Tibial artery (tissue), 4 donors: ENCODE measurements at regions of chr2 and their contacts with region 1.

Region 1: DNA sequence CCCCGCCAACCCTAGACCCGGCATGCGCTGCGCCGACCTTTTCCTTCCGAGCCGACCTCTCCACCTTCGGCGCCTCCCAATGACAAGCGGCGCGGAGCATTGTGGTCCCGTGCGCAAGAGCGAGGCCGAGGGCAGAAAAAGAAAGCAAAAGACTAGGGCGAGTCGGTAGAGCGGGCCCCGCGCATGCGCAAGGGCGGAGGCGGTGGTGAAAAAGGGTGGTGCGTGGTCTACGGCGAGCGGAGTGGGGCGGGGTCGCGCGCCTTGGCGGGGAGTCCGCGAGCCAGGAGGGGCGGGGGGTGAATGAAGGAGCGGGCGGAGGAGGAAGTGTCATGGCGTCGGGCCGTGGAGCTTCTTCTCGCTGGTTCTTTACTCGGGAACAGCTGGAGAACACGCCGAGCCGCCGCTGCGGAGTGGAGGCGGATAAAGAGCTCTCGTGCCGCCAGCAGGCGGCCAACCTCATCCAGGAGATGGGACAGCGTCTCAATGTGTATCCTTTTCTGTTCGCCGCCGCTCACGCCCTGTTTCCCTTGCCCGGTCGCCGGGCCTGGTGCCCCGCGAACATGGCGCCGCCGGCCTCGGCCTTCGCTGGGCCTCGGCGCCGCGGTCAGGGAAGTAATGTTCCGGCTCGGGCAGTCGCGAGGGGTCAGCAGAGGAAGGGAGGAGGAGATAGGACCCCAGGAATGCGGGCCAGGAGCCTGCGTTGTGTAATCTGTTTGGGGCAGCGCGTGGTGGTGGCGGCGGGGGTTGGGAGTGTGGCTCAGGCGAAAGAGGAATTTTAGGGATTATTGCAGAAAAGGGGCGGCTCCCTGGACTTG is at the start of gene CCNT2:
- DNase-seq: peak; percentile 99 to 100
- H3K4me3 ChIP-seq: peak within 1 kb of the TSS; percentile 78 to 95
- H3K27ac ChIP-seq: peak within 1 kb of the TSS; percentile 93 to 98
- H3K4me1 ChIP-seq: peaks cover 0 to 49% (median 25%) of the 10 kb centered on the region in 4 donors
- H3K27me3 ChIP-seq: no peaks in the 10 kb centered on the region
- CTCF ChIP-seq: no peak

Region 2: DNA sequence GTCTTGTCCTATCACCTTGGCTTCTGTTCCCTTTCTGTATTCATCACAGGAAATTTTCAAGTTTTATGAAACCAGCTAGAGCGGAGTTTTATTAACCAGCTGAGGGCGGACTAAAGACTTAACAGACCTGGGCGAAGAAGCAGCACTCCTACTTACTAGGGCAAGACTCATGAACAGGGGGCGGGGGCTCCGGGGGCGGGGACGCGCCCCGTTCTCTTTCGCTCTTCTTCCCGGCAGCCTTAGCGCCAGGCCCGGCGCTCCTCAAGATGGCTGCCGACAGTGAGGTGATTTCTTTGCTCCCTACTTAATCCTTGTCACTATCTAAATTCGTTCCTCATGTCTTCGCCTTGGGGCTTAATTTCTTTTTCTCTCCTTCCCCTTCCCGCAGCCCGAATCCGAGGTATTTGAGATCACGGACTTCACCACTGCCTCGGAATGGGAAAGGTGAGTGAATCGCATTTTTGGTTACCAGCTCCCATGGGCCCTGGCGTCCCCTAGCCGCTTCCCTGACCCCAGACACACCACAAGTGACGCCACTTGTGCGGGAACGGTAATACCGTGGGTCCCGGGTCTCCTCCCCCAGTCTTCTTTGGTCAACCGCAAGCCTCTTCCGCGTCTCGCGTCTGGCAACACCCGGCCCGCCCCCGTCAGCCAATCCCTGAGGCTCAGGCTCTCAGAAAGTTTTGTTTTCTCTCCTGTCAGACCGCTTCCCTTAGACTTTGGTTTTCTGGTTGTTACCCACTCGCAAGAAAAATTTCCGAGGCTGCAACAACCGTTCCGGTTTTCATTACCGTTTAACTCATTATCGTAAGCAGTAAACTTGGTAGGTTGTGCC is 133.5 kb after region 1 on chr2 and contains the start of gene RAB3GAP1:
- intact Hi-C with region 1: loop called (anchors 10 kb)
- DNase-seq: peak; percentile 78 to 86
- H3K4me3 ChIP-seq: peak within 1 kb of the TSS; percentile 67 to 81
- H3K27ac ChIP-seq: peak within 1 kb of the TSS; percentile 92 to 95
- H3K4me1 ChIP-seq: peaks cover 0 to 43% (median 26%) of the 10 kb centered on the region in 4 donors
- H3K27me3 ChIP-seq: no peaks in the 10 kb centered on the region
- CTCF ChIP-seq: no peak

Region 3: GRCh38 chr2:135164441-135164840 is 245.7 kb after region 1 on chr2:
- intact Hi-C with region 1: no loop called
- DNase-seq: no peak
- H3K4me3 ChIP-seq: no peak overlapping the region
- H3K27ac ChIP-seq: no peak overlapping the region
- H3K4me1 ChIP-seq: no peaks in the 10 kb centered on the region
- H3K27me3 ChIP-seq: no peaks in the 10 kb centered on the region
- CTCF ChIP-seq: no peak

Region 4: GRCh38 chr2:135531231-135532228 is 612.8 kb after region 1 on chr2 and contains the start of gene R3HDM1:
- intact Hi-C with region 1: loop called (anchors 5 kb)
- DNase-seq: peak; percentile 99
- H3K4me3 ChIP-seq: peak within 1 kb of the TSS; percentile 71 to 93
- H3K27ac ChIP-seq: peak within 1 kb of the TSS; percentile 86 to 89
- H3K4me1 ChIP-seq: peaks cover 3 to 18% (median 9%) of the 10 kb centered on the region in 4 donors
- H3K27me3 ChIP-seq: no peaks in the 10 kb centered on the region
- CTCF ChIP-seq: no peak

Region 5: DNA sequence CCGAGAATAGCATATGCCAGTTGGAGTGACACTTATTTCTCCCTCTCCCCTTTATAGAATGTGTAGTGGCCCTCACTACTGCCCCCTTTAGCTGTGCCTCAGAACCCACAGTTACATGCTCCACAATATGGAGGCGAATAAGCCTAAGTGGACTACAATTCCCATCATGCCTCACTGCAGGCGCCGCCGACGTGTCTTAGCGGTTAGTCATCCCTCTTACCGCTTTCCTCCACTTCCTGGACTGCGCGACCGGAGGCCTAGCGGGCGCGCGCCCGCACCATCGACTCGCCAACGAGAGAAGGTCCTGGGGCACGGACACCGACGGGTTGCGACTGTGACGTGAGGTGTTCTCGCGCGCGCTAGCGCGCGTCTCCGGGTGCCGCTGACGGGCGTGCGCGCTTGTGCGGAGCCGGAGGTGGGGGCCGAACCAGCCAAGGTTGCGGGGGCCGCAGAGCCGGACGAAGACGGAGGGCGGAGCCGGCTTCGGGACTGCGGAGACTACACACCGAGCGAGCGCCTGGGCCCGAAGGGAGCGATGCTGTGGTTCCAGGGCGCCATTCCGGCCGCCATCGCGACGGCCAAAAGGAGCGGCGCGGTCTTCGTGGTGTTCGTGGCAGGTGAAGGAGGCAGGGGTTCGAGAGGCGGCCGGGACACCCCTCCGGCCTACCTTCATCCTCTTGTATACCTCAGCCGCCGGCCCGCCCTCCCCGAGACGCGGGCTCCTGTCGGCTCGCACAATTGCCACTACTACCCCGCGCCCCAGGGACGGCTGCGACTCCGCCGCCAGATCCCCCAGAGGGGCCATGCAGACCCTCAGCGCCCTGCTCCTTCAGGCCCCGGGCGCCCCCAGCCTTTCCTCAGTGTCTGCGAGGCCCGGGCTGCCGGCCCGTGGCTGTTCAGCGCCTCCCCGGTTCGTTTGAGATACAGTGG is 822.9 kb after region 1 on chr2 and contains the start of gene UBXN4:
- intact Hi-C with region 1: loop called (anchors 2 kb)
- DNase-seq: peak; percentile 98 to 99
- H3K4me3 ChIP-seq: peak within 1 kb of the TSS; percentile 93 to 95
- H3K27ac ChIP-seq: peak within 1 kb of the TSS; percentile 99
- H3K4me1 ChIP-seq: peaks cover 0 to 29% (median 7%) of the 10 kb centered on the region in 4 donors
- H3K27me3 ChIP-seq: no peaks in the 10 kb centered on the region
- CTCF ChIP-seq: peak; percentile 18 to 26